Activated B cell treated with CpG ODN at 0.5 μM for 24 hours (primary cell): ENCODE measurements at regions of chr12 and their contacts with region 1.

Region 1: GRCh38 chr12:112382232-112382796 is at the start of gene HECTD4:
- DNase-seq: peak; percentile 96
- ATAC-seq: peak; percentile 96
- H3K4me3 Mint-ChIP-seq: peak within 1 kb of the TSS; percentile 97
- H3K27ac Mint-ChIP-seq: peak within 1 kb of the TSS; percentile 88
- H3K4me1 Mint-ChIP-seq: peaks cover 32% of the 10 kb centered on the region
- H3K27me3 Mint-ChIP-seq: no peaks in the 10 kb centered on the region
- CTCF ChIP-seq: no peak
- total RNA-seq, gene HECTD4: 76.3 and 98.8 TPM in 2 replicates

Region 2: GRCh38 chr12:111685744-111686517 is 696.4 kb before region 1 on chr12 and contains the starts of genes ACAD10 and BRAP:
- CTCF ChIA-PET with region 1: no interaction called
- POLR2A ChIA-PET with region 1: no interaction called
- intact Hi-C with region 1: loop called (anchors 10 kb)
- DNase-seq: peak; percentile 95
- ATAC-seq: peak; percentile 95
- H3K4me3 Mint-ChIP-seq: peak within 1 kb of the TSS; percentile 93
- H3K27ac Mint-ChIP-seq: peak within 1 kb of the TSS; percentile 95
- H3K4me1 Mint-ChIP-seq: peaks cover 41% of the 10 kb centered on the region
- H3K27me3 Mint-ChIP-seq: no peaks in the 10 kb centered on the region
- CTCF ChIP-seq: no peak
- total RNA-seq, gene ACAD10: 33.3 and 45.1 TPM in 2 replicates
- total RNA-seq, gene BRAP: 24.1 and 24.2 TPM in 2 replicates

Region 3: GRCh38 chr12:112012775-112013600 is 369.3 kb before region 1 on chr12 and contains the starts of genes ERP29 and TMEM116:
- CTCF ChIA-PET with region 1: interaction called, 3 read pairs
- POLR2A ChIA-PET with region 1: no interaction called
- intact Hi-C with region 1: loop called (anchors 1 kb)
- DNase-seq: peak; percentile 99
- ATAC-seq: peak; percentile 72
- H3K4me3 Mint-ChIP-seq: peak within 1 kb of the TSS; percentile 96
- H3K27ac Mint-ChIP-seq: peak within 1 kb of the TSS; percentile 99
- H3K4me1 Mint-ChIP-seq: peaks cover 63% of the 10 kb centered on the region
- H3K27me3 Mint-ChIP-seq: no peaks in the 10 kb centered on the region
- CTCF ChIP-seq: no peak
- total RNA-seq, gene ERP29: 133 and 135 TPM in 2 replicates
- total RNA-seq, gene TMEM116: 6.4 and 10.5 TPM in 2 replicates

Region 4: DNA sequence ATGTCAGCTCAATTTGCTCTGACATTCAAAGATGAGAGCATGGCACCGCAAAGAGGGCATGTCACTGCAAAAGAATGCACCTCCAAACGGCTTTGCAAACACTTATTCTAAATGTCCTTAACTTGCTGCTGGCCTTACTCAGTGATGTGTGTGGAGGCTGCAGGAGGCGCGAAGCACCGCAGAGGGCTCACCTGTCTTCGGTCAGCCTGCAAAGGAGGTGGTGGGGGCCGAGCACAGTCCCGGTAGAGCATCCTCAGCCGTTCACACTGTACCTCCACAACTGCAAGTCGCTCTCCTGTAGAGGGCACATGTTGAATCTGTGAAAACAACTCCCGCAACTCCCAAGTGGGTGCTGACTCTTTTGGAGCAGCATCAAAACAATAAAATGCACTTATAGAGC is 163.1 kb before region 1 on chr12:
- CTCF ChIA-PET with region 1: interaction called, 5 read pairs
- POLR2A ChIA-PET with region 1: no interaction called
- intact Hi-C with region 1: loop called (anchors 5 kb)
- DNase-seq: no peak
- ATAC-seq: no peak
- H3K4me3 Mint-ChIP-seq: no peak overlapping the region
- H3K27ac Mint-ChIP-seq: peak overlapping the region; percentile 71
- H3K4me1 Mint-ChIP-seq: peaks cover 44% of the 10 kb centered on the region
- H3K27me3 Mint-ChIP-seq: no peaks in the 10 kb centered on the region
- CTCF ChIP-seq: no peak

Region 5: DNA sequence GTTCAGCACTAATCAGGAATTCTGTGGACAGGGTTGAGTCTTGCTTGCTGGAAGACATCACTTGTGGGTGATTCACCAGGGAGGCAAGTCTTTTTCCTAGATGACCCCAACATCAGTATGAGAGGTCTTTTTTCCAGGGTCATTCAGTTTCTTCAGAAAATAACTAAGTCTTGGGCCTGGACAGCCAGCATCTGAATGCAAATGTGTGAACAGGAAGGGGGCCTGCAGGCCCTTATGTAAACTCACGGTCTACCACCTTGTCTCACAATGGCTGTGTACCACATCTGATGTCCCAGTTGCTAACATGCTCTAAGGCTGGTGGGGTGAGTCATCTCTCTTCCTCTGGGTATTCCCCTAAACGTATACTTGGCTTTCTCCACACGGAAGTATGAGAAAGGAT is 79.3 kb before region 1 on chr12:
- CTCF ChIA-PET with region 1: interaction called, 3 read pairs
- POLR2A ChIA-PET with region 1: no interaction called
- intact Hi-C with region 1: loop called (anchors 1 kb)
- DNase-seq: no peak
- ATAC-seq: peak; percentile 98
- H3K4me3 Mint-ChIP-seq: no peak overlapping the region
- H3K27ac Mint-ChIP-seq: peak overlapping the region; percentile 87
- H3K4me1 Mint-ChIP-seq: peaks cover 10% of the 10 kb centered on the region
- H3K27me3 Mint-ChIP-seq: no peaks in the 10 kb centered on the region
- CTCF ChIP-seq: no peak